ENCODE measurements at regions of chr16 and their contacts with region 1.

Region 1: DNA sequence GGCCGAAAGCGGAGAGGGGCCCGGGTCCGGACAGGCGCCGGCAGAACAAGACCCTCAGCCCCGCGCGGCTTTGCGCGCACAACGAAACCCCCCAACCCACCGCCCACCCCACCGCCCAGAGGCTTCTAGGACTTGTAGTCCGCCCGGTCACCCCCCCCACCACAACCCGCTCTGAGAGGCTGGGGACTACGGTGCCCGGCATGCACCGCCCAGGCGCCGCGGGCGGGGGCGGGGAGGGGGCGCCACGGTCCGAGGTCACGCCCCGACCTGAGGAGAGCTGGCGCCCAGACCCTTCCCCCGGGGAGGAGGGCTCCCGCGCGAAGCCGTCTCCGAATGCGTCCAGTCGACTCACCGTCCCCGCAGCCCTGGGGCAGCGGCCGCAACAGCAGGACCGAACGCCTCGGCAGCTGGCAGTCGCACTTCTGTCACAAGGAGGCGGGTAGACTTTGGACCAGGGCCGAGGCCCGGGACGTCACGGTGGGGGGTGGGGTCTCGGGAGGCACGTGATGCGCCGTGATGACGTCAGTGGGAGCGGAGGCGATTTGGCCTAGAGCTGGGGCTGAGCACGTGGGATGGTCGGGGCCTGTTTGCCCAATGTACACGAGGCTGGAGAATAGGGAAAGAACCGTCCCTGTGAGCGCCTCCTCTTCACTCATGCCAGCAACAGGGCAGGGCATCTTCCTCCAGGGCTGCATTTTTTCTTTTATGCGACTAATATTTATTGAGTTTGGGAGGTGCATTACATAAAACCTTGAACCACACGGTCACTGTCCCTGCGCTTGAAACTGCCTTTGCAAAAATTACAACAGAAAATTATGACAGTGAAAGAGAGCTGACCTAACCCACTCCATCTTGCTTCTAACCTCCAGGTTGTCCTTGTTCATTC is at the start of gene CDIP1:
- DNase-seq: peak; percentile 87
- H3K4me3 Mint-ChIP-seq: peak within 1 kb of the TSS; percentile 80
- H3K27ac Mint-ChIP-seq: peak within 1 kb of the TSS; percentile 72
- H3K4me1 Mint-ChIP-seq: peaks cover 38% of the 10 kb centered on the region
- H3K27me3 Mint-ChIP-seq: no peaks in the 10 kb centered on the region
- total RNA-seq, gene CDIP1: 46.0 and 47.9 TPM in 2 replicates

Region 2: GRCh38 chr16:4217204-4218131 is 321.1 kb before region 1 on chr16:
- intact Hi-C with region 1: no loop called
- DNase-seq: no peak
- H3K4me3 Mint-ChIP-seq: no peak overlapping the region
- H3K27ac Mint-ChIP-seq: no peak overlapping the region
- H3K4me1 Mint-ChIP-seq: no peaks in the 10 kb centered on the region
- H3K27me3 Mint-ChIP-seq: no peaks in the 10 kb centered on the region

Region 3: DNA sequence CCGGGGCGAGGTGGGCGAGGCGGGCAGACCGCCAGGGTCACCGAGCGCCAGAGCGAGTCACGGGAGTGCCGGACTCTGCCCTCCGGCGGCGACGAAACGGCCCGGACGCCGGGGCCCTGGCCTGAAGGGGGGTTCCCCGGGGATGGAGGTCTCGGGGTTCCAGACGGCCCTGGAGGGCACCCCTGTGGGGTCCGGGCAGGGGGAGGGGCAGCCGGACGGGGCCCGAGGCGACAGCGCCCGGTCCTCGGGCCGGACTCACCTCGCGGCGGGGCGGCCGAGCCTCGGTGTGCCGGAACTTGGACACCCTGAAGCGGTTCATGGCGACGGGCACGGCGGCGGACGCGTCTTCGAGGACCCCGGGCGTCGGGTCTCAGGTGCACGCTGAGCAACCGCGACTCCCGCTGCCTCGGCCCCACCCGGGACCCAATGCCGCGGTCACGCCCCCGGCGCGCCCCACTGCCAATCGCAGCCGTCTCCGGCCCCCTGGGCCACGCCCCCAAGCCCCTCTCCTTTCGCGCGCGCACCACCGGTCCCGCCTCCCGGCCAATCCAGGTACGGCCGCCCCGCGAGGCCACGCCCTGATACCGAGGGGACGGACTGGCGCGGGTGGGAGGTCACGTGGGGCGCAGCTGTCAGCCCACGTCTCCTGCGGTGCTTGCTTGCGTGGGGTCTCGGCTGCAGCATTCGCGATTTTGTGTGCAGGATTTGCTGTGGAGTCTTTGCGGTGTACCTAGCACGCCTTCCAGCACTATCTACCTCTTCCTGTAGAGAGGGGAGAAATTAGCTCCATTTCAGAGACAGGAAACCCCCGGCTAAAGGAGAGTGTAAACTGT is 122.2 kb before region 1 on chr16 and contains the start of gene CORO7:
- intact Hi-C with region 1: loop called (anchors 5 kb)
- DNase-seq: peak; percentile 98
- H3K4me3 Mint-ChIP-seq: peak within 1 kb of the TSS; percentile 95
- H3K27ac Mint-ChIP-seq: peak within 1 kb of the TSS; percentile 88
- H3K4me1 Mint-ChIP-seq: peaks cover 27% of the 10 kb centered on the region
- H3K27me3 Mint-ChIP-seq: no peaks in the 10 kb centered on the region
- total RNA-seq, gene CORO7: 92.5 and 101 TPM in 2 replicates

Region 4: GRCh38 chr16:4506450-4506849 is 32.1 kb before region 1 on chr16:
- intact Hi-C with region 1: loop called (anchors 2 kb)
- DNase-seq: peak; percentile 48
- H3K4me3 Mint-ChIP-seq: peak overlapping the region; percentile 22
- H3K27ac Mint-ChIP-seq: peak overlapping the region; percentile 85
- H3K4me1 Mint-ChIP-seq: peaks cover 47% of the 10 kb centered on the region
- H3K27me3 Mint-ChIP-seq: no peaks in the 10 kb centered on the region

Region 5: DNA sequence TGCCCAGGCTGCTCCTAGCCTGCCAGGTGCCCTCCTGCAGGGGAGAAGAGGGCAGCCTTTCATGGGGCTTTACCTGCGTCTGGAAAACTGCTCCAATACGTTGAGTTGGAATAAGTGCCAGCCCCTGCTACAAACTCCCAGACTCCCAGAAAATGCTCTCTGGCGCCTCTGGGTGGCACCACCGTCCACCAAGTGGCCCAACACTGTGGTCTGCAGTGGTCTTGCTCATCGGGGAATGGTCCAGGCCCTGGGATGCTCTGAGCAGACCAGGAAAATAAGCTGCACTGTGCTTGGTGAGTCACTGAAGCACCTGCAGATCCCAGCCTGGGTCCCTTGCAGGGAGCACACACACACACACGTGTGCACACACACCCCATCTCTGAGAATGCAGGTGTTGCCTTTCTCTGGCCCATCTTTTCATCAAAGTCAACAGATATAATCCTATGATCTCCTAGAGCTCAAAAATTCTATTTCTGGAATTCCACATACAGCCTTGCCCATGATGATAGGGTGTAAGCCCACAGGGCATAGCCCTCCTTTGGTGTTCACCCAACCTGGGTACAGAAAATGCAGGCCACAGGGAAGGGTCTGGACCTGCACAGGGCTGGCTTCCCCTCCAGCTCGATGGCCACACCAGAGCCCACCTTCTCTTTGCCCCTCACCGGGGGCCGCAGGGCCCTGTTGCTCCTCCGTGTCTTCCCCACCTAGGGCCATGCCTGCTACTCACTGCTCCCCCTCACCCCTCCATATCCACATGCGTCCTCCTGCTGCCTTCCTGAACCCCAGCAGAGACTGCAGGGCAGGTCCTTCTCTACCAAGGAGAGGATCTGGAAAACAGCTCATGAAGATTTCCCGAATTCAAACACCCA is 20.5 kb before region 1 on chr16:
- intact Hi-C with region 1: no loop called
- DNase-seq: no peak
- H3K4me3 Mint-ChIP-seq: no peak overlapping the region
- H3K27ac Mint-ChIP-seq: no peak overlapping the region
- H3K4me1 Mint-ChIP-seq: peaks cover 30% of the 10 kb centered on the region
- H3K27me3 Mint-ChIP-seq: no peaks in the 10 kb centered on the region

Region 6: GRCh38 chr16:4601036-4601863 is 62.7 kb after region 1 on chr16:
- intact Hi-C with region 1: no loop called
- DNase-seq: no peak
- H3K4me3 Mint-ChIP-seq: no peak overlapping the region
- H3K27ac Mint-ChIP-seq: no peak overlapping the region
- H3K4me1 Mint-ChIP-seq: no peaks in the 10 kb centered on the region
- H3K27me3 Mint-ChIP-seq: peaks cover 2% of the 10 kb centered on the region

Region 7: GRCh38 chr16:4616047-4616811 is 77.6 kb after region 1 on chr16:
- intact Hi-C with region 1: loop called (anchors 5 kb)
- DNase-seq: peak; percentile 99
- H3K4me3 Mint-ChIP-seq: peak overlapping the region; percentile 92
- H3K27ac Mint-ChIP-seq: peak overlapping the region; percentile 98
- H3K4me1 Mint-ChIP-seq: peaks cover 16% of the 10 kb centered on the region
- H3K27me3 Mint-ChIP-seq: no peaks in the 10 kb centered on the region

Region 8: DNA sequence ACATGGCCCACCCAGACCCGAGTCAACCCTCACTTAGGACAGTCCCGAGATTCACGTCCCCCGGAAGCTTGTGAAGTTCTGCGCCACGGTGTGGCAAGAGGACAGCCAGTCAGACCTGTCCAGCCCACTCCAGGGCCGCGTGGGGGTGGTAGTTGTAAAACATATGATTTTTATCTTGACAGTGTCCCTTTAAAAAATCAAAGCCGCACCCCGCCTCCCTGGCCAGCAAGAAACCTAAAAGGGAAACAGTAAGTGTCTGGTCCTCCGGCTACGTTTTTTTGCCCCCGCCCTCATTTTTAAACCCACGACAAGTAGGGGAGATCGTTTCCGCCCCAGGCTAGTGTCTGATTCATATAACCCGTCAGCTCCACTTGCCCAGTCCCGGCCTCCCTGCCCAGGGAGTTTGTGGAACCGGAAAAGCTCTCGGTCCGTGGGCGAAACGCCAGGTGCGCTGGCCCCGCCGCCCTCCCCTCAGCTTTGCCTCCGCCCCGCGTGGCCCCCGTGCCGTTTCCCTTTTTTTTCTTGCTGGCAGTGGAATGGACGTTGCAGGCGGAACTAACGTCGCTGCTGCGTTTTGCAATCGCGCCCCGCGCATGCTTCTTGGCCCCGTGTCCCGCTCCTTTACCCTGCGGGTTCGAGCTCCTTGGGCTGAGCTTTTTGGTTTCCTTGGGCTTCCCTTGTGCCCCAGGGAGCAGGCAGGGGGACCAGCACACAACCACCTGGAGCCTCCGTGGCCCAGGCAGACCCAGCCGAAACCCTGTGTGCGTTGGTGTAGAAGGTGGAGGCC is 141.4 kb after region 1 on chr16:
- intact Hi-C with region 1: loop called (anchors 5 kb)
- DNase-seq: no peak
- H3K4me3 Mint-ChIP-seq: no peak overlapping the region
- H3K27ac Mint-ChIP-seq: peak overlapping the region; percentile 33
- H3K4me1 Mint-ChIP-seq: peaks cover 20% of the 10 kb centered on the region
- H3K27me3 Mint-ChIP-seq: no peaks in the 10 kb centered on the region

Region 9: GRCh38 chr16:5215901-5216300 is 677.3 kb after region 1 on chr16:
- intact Hi-C with region 1: no loop called
- DNase-seq: no peak
- H3K4me3 Mint-ChIP-seq: no peak overlapping the region
- H3K27ac Mint-ChIP-seq: no peak overlapping the region
- H3K4me1 Mint-ChIP-seq: no peaks in the 10 kb centered on the region
- H3K27me3 Mint-ChIP-seq: peaks cover 8% of the 10 kb centered on the region